Naive thymus-derived CD8-positive, alpha-beta T cell (primary cell): ENCODE measurements at regions of chr7 and their contacts with region 1.

Region 1: GRCh38 chr7:130050773-130051125 is 425 bp downstream of the ZC3HC1 start:
- DNase-seq: no peak
- ATAC-seq: no peak
- H3K4me3 Mint-ChIP-seq: peak overlapping the region; percentile 94 to 99 (median 98)
- H3K27ac Mint-ChIP-seq: peak overlapping the region; percentile 93 to 98 (median 96)
- H3K4me1 Mint-ChIP-seq: peaks cover 5 to 17% (median 11%) of the 10 kb centered on the region in 4 donors
- H3K27me3 Mint-ChIP-seq: peaks cover 0 to 1% (median 0%) of the 10 kb centered on the region in 5 donors

Region 2: DNA sequence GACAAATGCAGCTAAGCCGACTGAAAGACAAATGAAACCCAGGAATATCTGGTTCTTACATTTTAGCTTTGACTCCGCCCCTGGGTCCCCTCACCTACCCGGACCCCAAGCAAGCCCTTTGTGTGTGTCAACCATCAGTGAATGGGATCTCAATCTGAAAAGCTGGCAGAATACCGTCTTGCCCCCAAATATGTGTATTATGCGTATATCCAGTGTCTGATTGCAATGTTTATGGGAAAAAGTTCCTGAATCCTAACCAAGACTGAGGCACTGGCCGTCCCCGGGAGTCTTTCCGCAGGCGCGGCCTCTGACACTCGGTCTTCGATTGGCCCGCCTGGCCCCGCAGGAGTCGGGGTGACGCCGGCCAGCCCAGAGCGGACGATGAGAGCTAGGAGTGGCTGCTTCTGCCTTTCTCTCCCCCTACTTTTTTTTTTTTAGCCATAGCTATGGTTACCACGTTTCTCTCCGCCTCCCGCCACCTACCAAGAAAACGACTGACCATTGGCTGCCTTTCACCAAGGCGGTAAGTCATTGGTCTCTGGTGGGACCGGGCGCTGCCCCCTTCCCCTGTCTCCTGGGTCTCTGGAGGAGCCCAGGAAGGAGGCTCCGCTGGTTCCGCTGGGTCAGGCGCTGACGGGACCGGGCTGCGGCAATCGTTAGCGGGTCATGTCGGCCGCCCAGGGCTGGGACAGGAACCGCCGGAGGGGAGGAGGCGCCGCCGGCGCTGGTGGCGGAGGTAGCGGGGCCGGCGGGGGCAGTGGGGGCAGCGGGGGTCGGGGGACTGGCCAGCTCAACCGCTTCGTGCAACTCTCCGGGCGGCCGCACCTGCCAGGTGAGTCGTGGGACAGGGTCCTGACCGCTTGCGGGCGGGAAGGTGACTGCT is 19.5 kb after region 1 on chr7 and contains the start of gene KLHDC10:
- POLR2A ChIA-PET with region 1: interaction called, 10 read pairs
- DNase-seq: peak; percentile 83 to 99 (median 97)
- ATAC-seq: peak; percentile 93 to 95
- H3K4me3 Mint-ChIP-seq: peak within 1 kb of the TSS; percentile 86 to 99 (median 93)
- H3K27ac Mint-ChIP-seq: peak within 1 kb of the TSS; percentile 84 to 97 (median 96)
- H3K4me1 Mint-ChIP-seq: peaks cover 28 to 51% (median 47%) of the 10 kb centered on the region in 4 donors
- H3K27me3 Mint-ChIP-seq: peaks cover 0 to 2% (median 0%) of the 10 kb centered on the region in 5 donors
- polyA plus RNA-seq, gene KLHDC10: 1.9 to 2.4 (median 2.3) TPM